BJ (cell line): ENCODE measurements at regions of chr20 and their contacts with region 1.

Region 1: DNA sequence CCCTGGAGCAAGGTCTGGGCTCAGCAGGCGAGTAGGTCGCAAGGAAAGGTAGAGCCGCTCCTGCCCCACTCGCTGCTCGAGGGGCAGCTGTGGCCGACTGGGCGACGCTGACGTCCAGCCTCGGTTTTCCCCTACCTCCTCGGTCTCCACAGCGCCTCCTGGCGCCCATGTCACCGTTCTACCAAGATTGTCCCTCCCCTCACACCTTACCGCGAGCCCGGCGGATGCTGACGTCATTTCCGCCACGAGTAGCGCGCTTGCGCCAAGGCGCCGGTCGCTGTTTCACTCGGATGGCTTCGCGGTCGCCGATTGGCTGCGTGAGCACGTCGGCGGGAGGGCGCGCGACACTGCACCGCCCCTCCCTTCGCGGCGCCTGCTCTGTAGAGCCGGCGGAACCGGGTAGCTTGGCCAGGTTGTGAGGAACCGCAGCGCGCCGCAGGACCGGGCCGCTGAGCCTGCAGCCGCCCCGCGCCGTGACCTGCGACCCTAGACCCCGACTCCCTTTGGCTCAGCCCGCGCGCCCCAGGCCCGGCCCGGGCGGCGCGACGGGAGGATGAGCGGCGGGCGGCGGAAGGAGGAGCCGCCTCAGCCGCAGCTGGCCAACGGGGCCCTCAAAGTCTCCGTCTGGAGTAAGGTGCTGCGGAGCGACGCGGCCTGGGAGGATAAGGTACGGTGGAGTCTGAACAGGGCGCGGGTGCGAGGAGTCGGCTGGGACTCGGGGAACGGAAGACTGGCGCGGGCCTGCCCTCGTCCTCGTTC is at the start of gene RAB5IF:
- DNase-seq: peak; percentile 91
- H3K4me3 ChIP-seq: peak within 1 kb of the TSS; percentile 54
- H3K27me3 ChIP-seq: no peaks in the 10 kb centered on the region
- CTCF ChIP-seq: peak; percentile 95
- polyA plus RNA-seq, gene RAB5IF: 92.4 and 138 TPM in 2 replicates

Region 2: DNA sequence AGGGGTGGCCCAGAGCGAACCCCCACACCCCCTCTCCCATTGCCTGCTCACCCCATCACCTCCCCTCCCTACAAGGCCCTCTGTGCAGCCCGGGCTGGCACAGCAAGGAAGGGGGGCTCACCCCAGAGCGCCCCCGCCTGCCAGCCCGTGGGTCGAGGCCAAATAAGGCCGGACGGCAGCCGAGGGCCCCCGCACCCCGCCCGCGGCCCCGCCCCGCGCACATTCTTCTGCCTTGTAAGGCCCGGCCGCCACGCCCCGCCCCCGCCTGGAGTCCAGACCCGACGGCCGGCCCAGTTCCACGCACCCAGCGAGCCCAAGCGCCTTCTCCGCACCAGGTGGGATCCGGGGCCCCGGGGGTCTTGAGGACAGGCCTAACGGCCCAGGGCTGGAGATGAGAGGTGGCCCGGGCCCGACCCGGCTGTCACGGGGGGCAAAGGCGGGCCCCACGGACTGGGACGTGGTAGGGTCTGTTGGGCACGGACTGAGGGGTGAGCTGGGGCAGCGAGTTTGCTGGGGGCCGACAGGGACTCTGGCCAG is 64.3 kb before region 1 on chr20 and contains the start of gene MYL9:
- CTCF ChIA-PET with region 1: interaction called, 15 read pairs
- POLR2A ChIA-PET with region 1: no interaction called
- DNase-seq: peak; percentile 13
- H3K4me3 ChIP-seq: peak within 1 kb of the TSS; percentile 99
- H3K27me3 ChIP-seq: no peaks in the 10 kb centered on the region
- CTCF ChIP-seq: peak; percentile 11; the same call in 1 of the 2 replicates
- polyA plus RNA-seq, gene MYL9: 445 and 673 TPM in 2 replicates

Region 3: GRCh38 chr20:36562724-36563123 is 42.9 kb before region 1 on chr20:
- CTCF ChIA-PET with region 1: interaction called, 25 read pairs
- POLR2A ChIA-PET with region 1: no interaction called
- DNase-seq: no peak
- H3K4me3 ChIP-seq: no peak overlapping the region
- H3K27me3 ChIP-seq: no peaks in the 10 kb centered on the region
- CTCF ChIP-seq: no peak

Region 4: GRCh38 chr20:36591854-36592641 is 13.5 kb before region 1 on chr20:
- CTCF ChIA-PET with region 1: interaction called, 26 read pairs
- POLR2A ChIA-PET with region 1: no interaction called
- DNase-seq: no peak
- H3K4me3 ChIP-seq: no peak overlapping the region
- H3K27me3 ChIP-seq: no peaks in the 10 kb centered on the region
- CTCF ChIP-seq: peak; percentile 61